Mammary epithelial cell (primary cell): ENCODE measurements at regions of chr5 and their contacts with region 1.

Region 1: DNA sequence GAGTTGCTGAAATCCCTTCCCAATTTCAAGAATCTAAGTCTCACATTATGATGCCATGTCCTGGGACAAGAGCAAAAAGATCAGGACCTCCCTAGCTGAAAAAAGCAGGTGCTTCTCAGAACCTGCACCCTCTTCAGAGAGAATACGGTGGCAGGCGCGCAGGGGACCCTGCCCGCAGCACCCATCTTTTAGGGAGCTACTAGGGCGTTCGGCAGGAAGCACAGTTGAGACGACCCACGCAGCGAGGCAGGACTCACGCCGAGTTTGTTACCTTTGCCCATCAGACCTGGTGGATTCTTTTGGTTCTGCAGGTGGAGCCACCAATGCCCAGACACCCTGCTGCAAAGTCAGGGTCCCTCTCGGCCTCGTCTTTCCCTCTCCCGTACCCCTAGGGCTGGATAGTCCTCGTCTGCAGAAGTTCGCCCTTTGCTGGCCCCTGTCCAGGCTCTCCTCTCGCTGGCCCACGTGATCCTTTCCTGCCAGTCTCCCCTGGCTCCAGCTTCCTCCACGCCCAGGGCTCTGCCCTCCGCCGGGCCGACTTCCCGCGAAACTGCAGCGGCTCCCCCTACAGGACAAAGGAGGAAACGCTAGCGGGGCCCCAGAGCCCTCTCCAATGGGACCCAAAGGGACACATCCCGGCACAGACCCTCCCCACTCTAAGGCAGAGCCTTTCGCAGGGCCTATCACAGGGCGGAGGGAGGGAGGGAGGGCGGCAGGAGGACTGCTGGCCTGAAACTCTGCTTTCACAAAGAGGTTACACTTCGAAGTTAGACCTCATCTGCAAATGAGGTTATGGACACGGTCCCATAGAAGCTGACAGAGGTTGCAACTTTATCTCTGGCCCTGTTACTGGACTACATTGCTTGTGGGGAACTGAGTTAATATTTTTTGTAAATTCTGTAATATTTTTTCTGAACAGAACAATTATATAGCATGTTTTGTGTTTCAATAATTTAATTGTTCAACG is 28.8 kb downstream of the TMEM174 start:
- DNase-seq: peak; percentile 49
- H3K4me3 ChIP-seq: peak overlapping the region in 1 of 3 experiments; percentile 29
- H3K27ac ChIP-seq: no peak overlapping the region
- H3K4me1 ChIP-seq: peaks cover 5% of the 10 kb centered on the region
- H3K27me3 ChIP-seq: peaks cover 3% of the 10 kb centered on the region
- CTCF ChIP-seq: peak; percentile 45 to 94

Region 2: DNA sequence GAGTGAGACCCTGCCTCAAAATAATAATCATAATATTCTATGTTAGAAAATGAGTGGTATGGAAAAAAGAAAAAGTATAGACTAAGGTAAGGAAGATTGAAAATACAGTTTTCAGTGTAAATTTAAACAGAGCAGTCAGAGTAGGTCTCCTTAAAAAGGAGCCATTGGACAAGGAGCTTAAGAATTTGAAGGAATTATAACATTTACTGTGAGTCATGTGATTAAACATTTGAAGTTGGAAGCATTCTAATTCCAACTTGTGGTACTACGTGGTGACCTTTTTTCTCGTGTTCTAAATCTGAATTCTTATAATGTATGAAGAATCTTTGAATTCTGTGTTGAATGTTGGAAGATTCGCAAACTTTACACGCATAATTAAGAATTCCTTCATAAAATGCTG is 120.7 kb before region 1 on chr5:
- CTCF ChIA-PET with region 1: no interaction called
- dilution Hi-C with region 1: no loop called
- in situ Hi-C with region 1: loop called (anchors 5 to 10 kb)
- intact Hi-C with region 1: loop called (anchors 1 kb)
- DNase-seq: no peak
- H3K4me3 ChIP-seq: no peak overlapping the region
- H3K27ac ChIP-seq: no peak overlapping the region
- H3K4me1 ChIP-seq: no peaks in the 10 kb centered on the region
- H3K27me3 ChIP-seq: no peaks in the 10 kb centered on the region
- CTCF ChIP-seq: no peak

Region 3: DNA sequence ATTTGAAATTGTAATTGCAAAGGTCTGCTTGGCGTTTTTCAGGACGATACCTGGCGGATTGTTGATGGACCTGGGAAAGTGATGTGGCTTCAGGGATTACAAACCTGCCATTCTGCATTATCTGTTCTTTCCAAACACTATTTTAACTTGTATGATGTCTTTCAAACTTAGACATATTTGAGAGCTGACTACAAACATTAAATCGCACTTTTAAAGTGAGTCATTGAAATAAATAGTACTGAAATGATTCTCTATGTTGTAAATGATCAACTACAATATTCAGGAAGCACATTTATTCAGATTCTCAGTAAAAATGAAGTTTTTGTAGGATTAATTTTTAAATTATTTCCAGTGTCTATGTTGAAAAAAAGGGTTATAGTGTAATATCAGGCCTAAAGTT is 113.8 kb before region 1 on chr5:
- CTCF ChIA-PET with region 1: no interaction called
- dilution Hi-C with region 1: no loop called
- in situ Hi-C with region 1: loop called (anchors 5 to 10 kb)
- intact Hi-C with region 1: loop called (anchors 1 kb)
- DNase-seq: no peak
- H3K4me3 ChIP-seq: no peak overlapping the region
- H3K27ac ChIP-seq: no peak overlapping the region
- H3K4me1 ChIP-seq: no peaks in the 10 kb centered on the region
- H3K27me3 ChIP-seq: no peaks in the 10 kb centered on the region
- CTCF ChIP-seq: no peak

Region 4: GRCh38 chr5:73093943-73094342 is 107.9 kb before region 1 on chr5:
- CTCF ChIA-PET with region 1: no interaction called
- dilution Hi-C with region 1: loop called (anchors 5 kb)
- in situ Hi-C with region 1: loop called in 1 of 2 experiments (anchors 10 kb)
- intact Hi-C with region 1: no loop called
- DNase-seq: peak; percentile 79
- H3K4me3 ChIP-seq: no peak overlapping the region
- H3K27ac ChIP-seq: no peak overlapping the region
- H3K4me1 ChIP-seq: peaks cover 11% of the 10 kb centered on the region
- H3K27me3 ChIP-seq: no peaks in the 10 kb centered on the region
- CTCF ChIP-seq: no peak

Region 5: DNA sequence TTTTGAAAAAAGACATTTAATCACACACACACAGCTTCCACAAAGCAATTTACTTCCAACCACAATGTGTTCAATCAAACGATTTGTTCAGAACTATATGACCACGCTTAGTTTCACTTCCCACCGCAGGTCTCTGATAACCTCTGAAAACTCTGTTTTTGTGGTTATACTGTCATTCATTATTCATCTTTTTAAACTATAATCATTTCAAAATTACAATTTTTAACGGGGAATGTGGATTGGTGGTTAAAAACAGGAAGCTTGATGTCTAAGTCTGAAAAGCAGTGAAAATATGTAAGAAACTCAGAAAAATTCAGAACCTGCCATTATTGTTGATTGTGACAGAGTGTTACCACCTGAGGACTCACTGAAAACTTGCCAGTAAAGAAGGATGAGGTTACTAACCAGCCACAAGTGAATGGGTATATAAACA is 41.6 kb before region 1 on chr5:
- CTCF ChIA-PET with region 1: no interaction called
- dilution Hi-C with region 1: loop called (anchors 5 kb)
- in situ Hi-C with region 1: no loop called
- intact Hi-C with region 1: no loop called
- DNase-seq: no peak
- H3K4me3 ChIP-seq: no peak overlapping the region
- H3K27ac ChIP-seq: no peak overlapping the region
- H3K4me1 ChIP-seq: no peaks in the 10 kb centered on the region
- H3K27me3 ChIP-seq: peaks cover 3% of the 10 kb centered on the region
- CTCF ChIP-seq: no peak